Endothelial cell of umbilical vein (primary cell): ENCODE measurements at regions of chr1 and their contacts with region 1.

Region 1: DNA sequence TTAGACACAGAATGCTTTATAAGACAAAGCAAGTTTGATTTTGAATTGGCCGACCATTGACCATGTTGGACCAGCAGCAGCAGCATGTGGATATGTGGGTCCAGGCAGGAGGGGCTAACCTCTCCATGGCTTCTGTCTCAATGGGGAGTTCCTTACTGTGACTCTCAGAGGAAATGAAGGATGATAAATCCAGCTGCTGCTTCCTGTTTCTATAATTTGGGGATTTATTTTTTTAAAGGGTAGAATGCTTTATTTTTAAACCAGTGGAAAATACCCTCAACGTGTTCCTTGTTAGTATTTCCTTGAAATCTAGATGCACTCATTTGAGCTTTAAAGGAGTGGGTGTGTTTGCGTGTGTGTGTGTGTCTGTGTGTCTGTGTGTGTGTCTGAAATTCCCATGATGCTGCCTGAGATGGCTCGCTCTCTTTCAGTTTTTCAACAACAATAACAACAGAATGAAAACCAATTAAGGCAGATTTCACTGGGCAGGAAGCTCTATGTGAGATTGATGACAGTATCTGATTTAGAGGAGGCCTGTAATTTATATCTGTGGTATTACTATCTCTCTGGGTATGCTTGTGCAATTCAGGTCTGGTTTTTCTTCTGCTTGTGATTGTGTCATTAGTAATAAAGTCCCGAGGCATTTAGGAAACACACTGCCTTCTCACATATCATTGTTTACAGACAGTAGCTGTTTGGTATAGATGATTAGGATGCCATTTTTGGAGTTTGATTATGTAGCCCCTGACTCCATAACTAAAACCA is 86.1 kb upstream of the ZNF326 start:
- DNase-seq: peak; percentile 70
- H3K4me3 ChIP-seq: no peak overlapping the region
- H3K27ac ChIP-seq: peak overlapping the region; percentile 84
- H3K4me1 ChIP-seq: peaks cover 66% of the 10 kb centered on the region
- H3K27me3 ChIP-seq: no peaks in the 10 kb centered on the region
- CTCF ChIP-seq: no peak
- POLR2A ChIP-seq: no peak

Region 2: GRCh38 chr1:88891318-88891950 is 1017.4 kb before region 1 on chr1 and contains the start of gene GTF2B:
- CTCF ChIA-PET with region 1: no interaction called
- POLR2A ChIA-PET with region 1: no interaction called
- dilution Hi-C with region 1: no loop called
- intact Hi-C with region 1: no loop called
- DNase-seq: peak; percentile 96
- H3K4me3 ChIP-seq: peak within 1 kb of the TSS; percentile 68 to 91 (median 81)
- H3K27ac ChIP-seq: peak within 1 kb of the TSS; percentile 27
- H3K4me1 ChIP-seq: peaks cover 7% of the 10 kb centered on the region
- H3K27me3 ChIP-seq: peaks cover 1 to 2% of the 10 kb centered on the region in 2 experiments
- CTCF ChIP-seq: no peak
- POLR2A ChIP-seq: peak; percentile 98
- total RNA-seq, gene GTF2B: 18.0 and 19.8 TPM in 2 replicates

Region 3: DNA sequence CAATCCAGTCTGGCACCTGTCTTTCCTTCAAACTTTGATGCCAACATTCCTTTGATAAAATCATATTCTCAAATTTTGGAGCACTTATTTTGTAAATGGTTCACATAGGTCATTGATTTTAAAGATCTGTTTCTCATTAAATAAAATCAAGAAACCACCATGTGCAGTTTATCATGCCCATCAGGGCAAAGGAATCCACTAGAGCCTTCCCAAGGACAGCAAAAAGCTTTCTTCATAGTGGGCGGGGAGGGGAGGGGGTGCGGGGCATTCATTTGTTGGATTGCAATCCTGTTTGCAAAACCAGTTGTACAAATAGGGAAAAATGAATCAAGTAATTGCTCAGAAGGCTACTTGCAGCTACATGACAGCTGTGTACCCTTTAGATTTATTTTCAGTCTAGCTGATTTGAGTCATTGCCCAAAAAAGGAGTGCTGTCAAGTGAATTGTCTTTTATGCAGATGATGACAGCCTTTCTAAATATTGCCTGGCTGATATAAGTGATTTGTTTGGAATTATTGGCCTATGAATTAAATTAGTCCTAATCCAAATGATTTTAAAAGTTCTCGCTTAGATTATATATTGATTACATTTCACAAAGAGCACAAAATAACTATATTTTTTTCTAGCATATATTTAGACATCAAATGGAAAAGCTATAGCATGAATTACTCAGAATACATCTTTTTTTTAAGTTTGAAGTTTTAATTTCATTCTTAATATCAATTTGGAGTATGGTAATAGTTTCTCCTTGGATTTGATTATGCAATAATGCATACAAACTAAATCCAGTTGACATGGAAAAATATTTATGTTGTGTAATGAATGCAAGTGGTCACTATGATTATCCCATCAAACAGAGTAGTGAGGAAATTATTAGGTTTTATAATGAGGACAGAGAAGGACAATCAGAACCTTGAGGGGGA is 361.0 kb before region 1 on chr1:
- CTCF ChIA-PET with region 1: no interaction called
- POLR2A ChIA-PET with region 1: no interaction called
- dilution Hi-C with region 1: no loop called
- intact Hi-C with region 1: loop called (anchors 5 kb)
- DNase-seq: peak; percentile 73
- H3K4me3 ChIP-seq: no peak overlapping the region
- H3K27ac ChIP-seq: peak overlapping the region; percentile 94
- H3K4me1 ChIP-seq: peaks cover 47% of the 10 kb centered on the region
- H3K27me3 ChIP-seq: no peaks in the 10 kb centered on the region
- CTCF ChIP-seq: no peak
- POLR2A ChIP-seq: no peak

Region 4: DNA sequence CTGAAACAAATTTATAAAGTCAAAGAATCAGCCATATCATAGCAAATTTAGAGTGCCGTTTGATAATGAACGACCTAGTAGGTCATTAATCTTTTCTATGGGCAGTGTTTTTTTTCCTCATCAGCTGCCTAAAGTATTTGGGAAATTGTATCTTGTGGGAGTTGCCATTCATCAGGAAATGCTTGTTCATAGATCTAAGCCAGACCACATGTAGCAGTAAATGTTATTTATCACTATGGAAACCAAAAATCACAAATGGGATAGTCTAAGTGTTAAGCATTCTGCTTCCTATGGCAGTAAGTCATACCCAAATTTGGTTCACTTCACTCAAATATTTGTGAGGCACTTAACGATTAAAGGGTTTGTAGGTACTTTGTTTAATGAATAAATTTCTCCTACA is 35.1 kb before region 1 on chr1:
- CTCF ChIA-PET with region 1: no interaction called
- POLR2A ChIA-PET with region 1: no interaction called
- dilution Hi-C with region 1: no loop called
- intact Hi-C with region 1: loop called (anchors 5 kb)
- DNase-seq: peak; percentile 76
- H3K4me3 ChIP-seq: no peak overlapping the region
- H3K27ac ChIP-seq: no peak overlapping the region
- H3K4me1 ChIP-seq: peaks cover 6% of the 10 kb centered on the region
- H3K27me3 ChIP-seq: no peaks in the 10 kb centered on the region
- CTCF ChIP-seq: no peak
- POLR2A ChIP-seq: no peak

Region 5: DNA sequence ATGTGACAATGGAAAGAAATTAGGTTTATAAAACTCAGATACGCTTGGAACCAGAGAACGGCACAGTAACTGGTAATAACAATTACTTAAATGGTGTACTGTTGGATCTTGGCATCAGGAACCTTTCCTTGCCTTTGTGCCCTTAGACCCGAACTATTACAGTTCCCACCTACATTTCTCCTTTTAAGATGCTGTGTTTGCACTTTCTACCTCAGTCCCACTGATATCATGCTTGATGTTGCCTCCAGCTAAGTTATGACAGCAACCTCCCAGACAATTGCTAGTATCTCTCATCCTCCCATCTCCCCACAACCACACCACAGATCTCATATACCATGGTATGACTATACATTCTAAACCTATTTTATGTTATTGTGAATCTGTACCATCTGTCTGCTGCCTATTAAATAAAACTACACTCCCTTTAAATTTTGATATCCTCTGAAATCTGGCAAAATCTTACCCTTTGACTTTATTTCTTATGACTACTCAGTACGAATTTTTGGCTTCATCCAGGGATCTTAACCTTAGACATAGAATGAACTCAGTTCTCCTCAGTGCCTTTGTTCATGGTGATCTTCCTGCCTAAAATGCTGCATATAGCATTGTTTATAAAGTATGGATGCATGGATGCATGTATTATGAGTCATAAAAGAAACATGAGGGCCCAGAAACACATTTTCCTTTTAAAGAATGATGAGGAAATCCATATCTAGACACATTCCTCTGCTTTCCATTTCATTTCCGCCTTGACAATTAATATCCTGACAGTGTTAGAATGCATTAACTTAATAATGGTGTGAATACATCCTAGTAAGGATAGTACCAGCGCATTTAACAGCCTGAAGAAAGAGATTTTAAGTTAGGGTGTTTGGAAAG is 23.9 kb before region 1 on chr1:
- CTCF ChIA-PET with region 1: interaction called, 3 read pairs
- POLR2A ChIA-PET with region 1: interaction called, 3 read pairs
- dilution Hi-C with region 1: no loop called
- intact Hi-C with region 1: loop called (anchors 1 kb)
- DNase-seq: peak; percentile 87
- H3K4me3 ChIP-seq: peak overlapping the region in 1 of 3 experiments; percentile 23
- H3K27ac ChIP-seq: peak overlapping the region; percentile 80
- H3K4me1 ChIP-seq: peaks cover 48% of the 10 kb centered on the region
- H3K27me3 ChIP-seq: no peaks in the 10 kb centered on the region
- CTCF ChIP-seq: no peak
- POLR2A ChIP-seq: no peak

Region 6: GRCh38 chr1:89894210-89895201 is 14.3 kb before region 1 on chr1:
- CTCF ChIA-PET with region 1: interaction called, 3 read pairs
- POLR2A ChIA-PET with region 1: interaction called, 3 read pairs
- dilution Hi-C with region 1: no loop called
- intact Hi-C with region 1: loop called (anchors 1 kb)
- DNase-seq: peak; percentile 86
- H3K4me3 ChIP-seq: peak overlapping the region in 1 of 3 experiments; percentile 1
- H3K27ac ChIP-seq: peak overlapping the region; percentile 73
- H3K4me1 ChIP-seq: peaks cover 59% of the 10 kb centered on the region
- H3K27me3 ChIP-seq: no peaks in the 10 kb centered on the region
- CTCF ChIP-seq: no peak
- POLR2A ChIP-seq: peak; percentile 37

Region 7: DNA sequence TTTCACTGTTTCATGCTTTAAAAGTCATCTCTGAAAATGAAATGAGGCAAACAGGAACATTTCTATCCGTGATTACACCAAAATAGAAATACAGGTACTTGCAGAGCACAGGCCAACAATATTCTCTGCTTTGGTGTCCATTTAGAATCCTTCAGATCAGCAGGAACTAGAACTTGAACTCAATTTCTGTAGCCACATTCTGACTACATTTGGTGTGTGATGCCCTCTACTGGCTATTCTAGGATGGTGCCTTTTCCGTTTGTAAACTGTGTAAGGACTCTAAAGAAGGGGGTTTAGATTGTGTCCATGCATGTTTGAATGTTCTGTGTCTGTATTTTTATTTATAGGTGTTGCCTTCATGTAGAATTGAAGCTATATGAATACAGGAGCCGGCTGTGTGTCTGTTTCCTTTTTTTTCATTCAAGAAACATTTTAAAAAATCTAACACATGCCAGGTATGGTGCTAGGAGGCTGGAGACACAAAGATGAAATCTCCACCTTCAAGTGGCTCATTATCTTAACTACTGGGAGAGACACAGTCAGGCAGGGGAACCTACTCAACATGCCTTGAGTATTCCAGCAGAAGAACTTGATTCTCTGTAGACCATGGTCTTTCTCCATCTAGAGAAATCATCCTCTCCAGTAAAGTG is 78.4 kb after region 1 on chr1:
- CTCF ChIA-PET with region 1: no interaction called
- POLR2A ChIA-PET with region 1: no interaction called
- dilution Hi-C with region 1: no loop called
- intact Hi-C with region 1: loop called (anchors 5 kb)
- DNase-seq: peak; percentile 82
- H3K4me3 ChIP-seq: no peak overlapping the region
- H3K27ac ChIP-seq: no peak overlapping the region
- H3K4me1 ChIP-seq: no peaks in the 10 kb centered on the region
- H3K27me3 ChIP-seq: peaks cover 0 to 2% of the 10 kb centered on the region in 2 experiments
- CTCF ChIP-seq: peak; percentile 66 to 68
- POLR2A ChIP-seq: no peak